Common myeloid progenitor, CD34-positive (primary cell): ENCODE measurements at regions of chr18 and their contacts with region 1.

Region 1: GRCh38 chr18:13823707-13824395 is at the start of gene MC5R:
- DNase-seq: peak; percentile 53 to 80 (median 79)
- H3K4me3 ChIP-seq: peak within 1 kb of the TSS in 6 of 7 experiments; percentile 18 to 75 (median 58)
- H3K27ac ChIP-seq: no peak within 1 kb of the TSS
- H3K4me1 ChIP-seq: peaks cover 0 to 5% (median 3%) of the 10 kb centered on the region in 4 experiments
- H3K27me3 ChIP-seq: peaks cover 3 to 43% (median 17%) of the 10 kb centered on the region in 5 experiments

Region 2: GRCh38 chr18:13813271-13813849 is 10.5 kb before region 1 on chr18:
- CTCF ChIA-PET with region 1: interaction called, 11 read pairs
- POLR2A ChIA-PET with region 1: no interaction called
- DNase-seq: peak; percentile 47 to 69 (median 57)
- H3K4me3 ChIP-seq: no peak overlapping the region
- H3K27ac ChIP-seq: no peak overlapping the region
- H3K4me1 ChIP-seq: peaks cover 0 to 2% (median 0%) of the 10 kb centered on the region in 4 experiments
- H3K27me3 ChIP-seq: peaks cover 0 to 7% (median 2%) of the 10 kb centered on the region in 5 experiments

Region 3: DNA sequence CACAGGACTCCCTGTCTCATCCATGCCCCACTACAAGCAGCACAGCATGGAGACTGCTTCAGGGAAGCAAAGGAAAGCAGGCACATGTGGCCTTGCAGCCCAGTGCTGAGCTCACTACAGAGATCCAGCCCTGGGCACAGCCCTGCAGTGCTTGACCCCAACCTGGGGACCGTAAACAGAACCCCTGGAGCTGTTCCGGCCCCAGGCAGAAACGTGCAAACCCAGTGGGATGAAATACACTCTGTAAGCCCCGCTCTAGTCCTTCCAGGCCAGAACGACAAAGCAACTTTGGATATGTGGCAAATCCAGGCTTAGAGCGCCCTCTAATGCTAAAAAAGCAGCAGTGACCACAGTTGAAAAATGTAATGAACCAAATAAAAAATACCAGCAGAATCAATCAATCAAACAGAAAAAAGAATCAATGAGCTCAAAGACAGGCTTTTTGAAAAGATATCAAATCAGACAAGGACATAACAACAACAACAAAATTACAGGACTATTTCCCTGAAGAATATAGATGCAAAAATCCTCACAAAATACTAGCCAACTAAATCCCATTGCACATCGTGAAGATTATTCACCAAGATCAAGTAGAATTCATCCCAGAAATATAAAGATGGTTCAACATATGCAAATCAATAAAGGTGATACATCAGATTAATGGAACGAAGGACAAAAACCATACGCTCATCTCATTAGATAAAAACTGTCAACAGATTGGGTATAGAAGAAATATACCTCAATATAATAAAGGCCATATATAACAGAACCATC is 262.8 kb after region 1 on chr18:
- CTCF ChIA-PET with region 1: interaction called, 11 read pairs
- POLR2A ChIA-PET with region 1: no interaction called
- DNase-seq: peak; percentile 15 to 53 (median 52)
- H3K4me3 ChIP-seq: no peak overlapping the region
- H3K27ac ChIP-seq: no peak overlapping the region
- H3K4me1 ChIP-seq: no peaks in the 10 kb centered on the region
- H3K27me3 ChIP-seq: no peaks in the 10 kb centered on the region